ENCODE measurements at regions of chr6 and their contacts with region 1.

Region 1: GRCh38 chr6:30828027-30828960 is 56.0 kb upstream of the DDR1 start:
- DNase-seq: peak; percentile 86 to 92
- ATAC-seq: peak; percentile 77

Region 2: GRCh38 chr6:30877419-30878371 is 49.4 kb after region 1 on chr6:
- intact Hi-C with region 1: loop called in 1 of 2 experiments (anchors 5 kb)
- DNase-seq: peak; percentile 89 to 94
- ATAC-seq: peak; percentile 79

Region 3: GRCh38 chr6:31087494-31088089 is 259.3 kb after region 1 on chr6:
- intact Hi-C with region 1: loop called (anchors 10 kb)
- DNase-seq: peak; percentile 76 to 95
- ATAC-seq: peak; percentile 81

Measured in left colon (tissue), 2 donors.